ENCODE measurements at regions of chr1 and their contacts with region 1.

Region 1: GRCh38 chr1:171081314-171081753 is 9.4 kb upstream of the FMO3 start:
- DNase-seq: peak; percentile 52
- H3K4me3 Mint-ChIP-seq: no peak overlapping the region
- H3K27ac Mint-ChIP-seq: no peak overlapping the region
- H3K4me1 Mint-ChIP-seq: no peaks in the 10 kb centered on the region
- H3K27me3 Mint-ChIP-seq: no peaks in the 10 kb centered on the region
- CTCF ChIP-seq: peak; percentile 34

Region 2: DNA sequence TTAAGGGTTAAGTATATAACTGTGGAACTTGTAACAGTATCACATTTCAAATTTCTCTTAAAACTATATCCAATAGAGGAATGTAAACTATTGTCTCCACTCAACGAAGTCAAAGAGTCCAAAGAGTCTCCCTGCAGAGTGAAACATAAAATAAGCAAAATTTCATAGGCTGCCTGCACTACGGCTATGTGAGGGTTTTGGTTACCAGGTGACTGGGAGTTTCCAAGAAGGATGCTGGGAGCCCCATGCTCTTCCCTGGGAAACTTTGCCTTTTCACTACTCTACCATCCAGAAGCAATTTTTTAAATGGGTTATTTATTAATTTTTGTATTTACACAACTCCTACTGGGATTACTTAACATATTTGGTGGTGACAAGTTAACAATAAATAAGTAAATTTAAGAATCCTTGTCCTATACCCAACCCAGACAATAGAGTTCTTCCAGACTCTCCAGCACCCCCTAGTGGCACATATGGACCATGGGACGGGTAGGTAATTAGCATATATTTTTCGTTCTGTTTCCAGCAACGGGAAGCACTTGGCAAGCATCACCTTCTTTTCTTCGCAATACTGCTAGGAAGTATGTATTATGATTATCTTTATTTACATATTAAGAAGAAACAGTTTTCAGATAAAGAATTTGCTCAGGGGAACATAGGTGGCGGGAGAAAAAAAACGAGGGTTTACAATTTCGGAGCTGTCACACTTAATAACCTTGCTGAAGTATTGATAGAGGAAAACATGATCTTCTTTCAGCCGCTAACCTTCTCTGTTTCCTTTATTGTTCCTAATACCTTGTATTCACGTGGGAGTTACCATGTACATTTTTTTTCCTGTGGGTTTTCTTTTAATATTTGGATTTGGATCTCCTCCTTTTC is 107.3 kb after region 1 on chr1:
- CTCF ChIA-PET with region 1: interaction called, 10 read pairs
- POLR2A ChIA-PET with region 1: no interaction called
- intact Hi-C with region 1: loop called (anchors 2 kb)
- DNase-seq: peak; percentile 87
- H3K4me3 Mint-ChIP-seq: no peak overlapping the region
- H3K27ac Mint-ChIP-seq: no peak overlapping the region
- H3K4me1 Mint-ChIP-seq: no peaks in the 10 kb centered on the region
- H3K27me3 Mint-ChIP-seq: no peaks in the 10 kb centered on the region
- CTCF ChIP-seq: peak; percentile 94

Region 3: GRCh38 chr1:171196351-171196750 is 115.0 kb after region 1 on chr1:
- CTCF ChIA-PET with region 1: interaction called, 12 read pairs
- POLR2A ChIA-PET with region 1: no interaction called
- intact Hi-C with region 1: no loop called
- DNase-seq: no peak
- H3K4me3 Mint-ChIP-seq: no peak overlapping the region
- H3K27ac Mint-ChIP-seq: no peak overlapping the region
- H3K4me1 Mint-ChIP-seq: no peaks in the 10 kb centered on the region
- H3K27me3 Mint-ChIP-seq: no peaks in the 10 kb centered on the region
- CTCF ChIP-seq: no peak

Region 4: DNA sequence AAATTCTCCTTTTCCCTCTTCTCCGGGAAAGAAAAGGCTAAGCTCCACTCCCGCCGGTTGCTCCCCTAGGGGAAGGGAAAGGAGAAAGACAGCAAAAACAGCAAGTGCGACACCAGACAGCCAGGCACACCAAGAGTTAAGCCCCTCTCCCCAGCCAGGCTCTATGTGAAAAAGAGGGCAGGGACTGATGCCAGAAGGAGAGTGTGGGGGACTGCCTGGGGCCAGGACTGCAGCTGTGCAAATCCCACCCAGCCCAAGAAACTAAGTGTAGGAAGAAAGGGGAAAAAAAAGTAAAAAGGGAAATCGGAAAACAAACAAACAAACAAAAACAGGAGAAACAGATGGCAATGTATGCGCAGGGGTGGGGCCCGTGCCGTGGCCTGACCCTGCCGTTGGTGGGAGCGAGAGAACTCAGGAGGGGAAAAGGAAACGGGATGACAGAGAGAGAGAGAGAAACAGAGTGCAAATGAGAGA is 139.3 kb after region 1 on chr1:
- CTCF ChIA-PET with region 1: interaction called, 146 read pairs
- POLR2A ChIA-PET with region 1: interaction called, 4 read pairs
- intact Hi-C with region 1: no loop called
- DNase-seq: no peak
- H3K4me3 Mint-ChIP-seq: peak overlapping the region; percentile 70
- H3K27ac Mint-ChIP-seq: peak overlapping the region; percentile 98
- H3K4me1 Mint-ChIP-seq: peaks cover 61% of the 10 kb centered on the region
- H3K27me3 Mint-ChIP-seq: no peaks in the 10 kb centered on the region
- CTCF ChIP-seq: no peak

Region 5: DNA sequence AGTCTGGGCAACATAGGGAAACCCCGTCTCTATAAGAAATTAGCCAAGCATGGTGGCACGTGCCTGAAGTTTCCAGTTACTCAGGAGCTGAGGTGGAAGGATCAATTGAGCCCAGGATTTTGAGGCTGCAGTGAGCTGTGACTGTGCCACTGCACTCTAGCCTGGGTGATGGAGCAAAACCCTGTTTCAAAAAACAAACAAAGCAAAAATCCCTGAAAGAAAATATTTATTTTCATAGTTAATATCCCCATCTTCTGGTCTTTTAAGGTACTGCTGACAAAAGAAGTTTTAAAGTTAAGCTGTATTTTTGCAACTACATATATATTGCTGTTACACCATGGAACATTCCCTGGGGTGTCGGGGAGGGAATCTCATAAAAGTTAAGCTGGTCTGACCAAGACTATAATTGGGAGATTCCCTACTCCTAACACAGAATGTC is 634.5 kb after region 1 on chr1:
- CTCF ChIA-PET with region 1: interaction called, 3 read pairs
- POLR2A ChIA-PET with region 1: no interaction called
- intact Hi-C with region 1: loop called (anchors 5 kb)
- DNase-seq: peak; percentile 18
- H3K4me3 Mint-ChIP-seq: no peak overlapping the region
- H3K27ac Mint-ChIP-seq: no peak overlapping the region
- H3K4me1 Mint-ChIP-seq: peaks cover 6% of the 10 kb centered on the region
- H3K27me3 Mint-ChIP-seq: no peaks in the 10 kb centered on the region
- CTCF ChIP-seq: peak; percentile 44